ENCODE measurements at regions of chrX and their contacts with region 1.

Region 1: GRCh38 chrX:53071604-53072417 is 10.4 kb upstream of the TSPYL2 start:
- DNase-seq: peak; percentile 82 to 84
- H3K4me3 ChIP-seq: no peak overlapping the region
- H3K27ac ChIP-seq: peak overlapping the region; percentile 70 to 89 (median 80)
- H3K4me1 ChIP-seq: peaks cover 0 to 7% of the 10 kb centered on the region in 2 donors
- H3K27me3 ChIP-seq: no peaks in the 10 kb centered on the region
- CTCF ChIP-seq: peak; percentile 30 to 84 (median 52)
- POLR2A ChIP-seq: no peak

Region 2: DNA sequence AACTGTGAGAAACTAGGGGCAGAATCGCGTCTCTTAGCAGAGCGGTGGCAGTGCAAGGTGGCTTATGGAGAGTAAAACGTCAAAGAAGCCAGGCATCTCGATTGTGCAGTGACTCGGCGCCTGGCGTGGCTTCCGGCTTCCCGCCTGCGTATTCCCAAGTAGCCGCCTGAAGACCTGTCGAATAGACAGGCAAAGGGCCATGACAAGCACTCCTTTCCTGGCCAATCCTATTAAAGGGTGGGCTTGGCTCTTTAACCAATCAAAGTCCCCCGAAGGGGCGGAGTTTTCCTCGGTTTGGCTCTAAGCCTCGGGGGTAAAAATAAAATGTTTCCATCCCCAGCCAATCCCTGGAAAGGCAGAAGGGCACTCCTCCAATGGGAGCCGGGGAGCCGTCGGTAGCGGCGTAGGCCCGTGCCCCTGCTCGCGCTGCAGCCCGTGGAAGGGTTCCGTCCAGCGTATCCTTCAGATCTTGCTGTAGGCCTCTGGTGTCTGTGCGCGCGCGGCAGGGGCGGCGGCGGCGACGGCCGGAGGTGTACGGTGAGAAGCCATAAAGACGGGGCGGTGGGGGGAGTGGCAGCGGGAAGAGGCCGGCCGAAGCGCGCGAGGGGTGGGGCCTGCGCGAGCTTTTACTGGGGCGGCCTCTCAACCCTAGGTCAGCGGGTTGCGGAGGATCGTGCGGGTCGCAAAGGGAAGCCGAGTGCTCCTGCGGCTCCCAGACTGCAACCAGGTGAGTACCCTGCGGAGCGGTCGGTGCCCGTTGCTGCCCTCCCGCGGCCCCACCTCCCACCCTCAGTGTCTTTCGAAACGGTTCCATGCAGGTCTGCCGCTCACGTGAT is 22.2 kb after region 1 on chrX and contains the start of gene KANTR:
- intact Hi-C with region 1: loop called (anchors 2 kb)
- DNase-seq: peak; percentile 89
- H3K4me3 ChIP-seq: peak within 1 kb of the TSS; percentile 20 to 46 (median 42)
- H3K27ac ChIP-seq: peak within 1 kb of the TSS; percentile 78 to 86 (median 86)
- H3K4me1 ChIP-seq: no peaks in the 10 kb centered on the region
- H3K27me3 ChIP-seq: no peaks in the 10 kb centered on the region
- CTCF ChIP-seq: no peak
- POLR2A ChIP-seq: peak in 1 of 2 donors; percentile 63
- total RNA-seq, gene KANTR: 15.5 to 41.5 (median 21.8) TPM

Region 3: DNA sequence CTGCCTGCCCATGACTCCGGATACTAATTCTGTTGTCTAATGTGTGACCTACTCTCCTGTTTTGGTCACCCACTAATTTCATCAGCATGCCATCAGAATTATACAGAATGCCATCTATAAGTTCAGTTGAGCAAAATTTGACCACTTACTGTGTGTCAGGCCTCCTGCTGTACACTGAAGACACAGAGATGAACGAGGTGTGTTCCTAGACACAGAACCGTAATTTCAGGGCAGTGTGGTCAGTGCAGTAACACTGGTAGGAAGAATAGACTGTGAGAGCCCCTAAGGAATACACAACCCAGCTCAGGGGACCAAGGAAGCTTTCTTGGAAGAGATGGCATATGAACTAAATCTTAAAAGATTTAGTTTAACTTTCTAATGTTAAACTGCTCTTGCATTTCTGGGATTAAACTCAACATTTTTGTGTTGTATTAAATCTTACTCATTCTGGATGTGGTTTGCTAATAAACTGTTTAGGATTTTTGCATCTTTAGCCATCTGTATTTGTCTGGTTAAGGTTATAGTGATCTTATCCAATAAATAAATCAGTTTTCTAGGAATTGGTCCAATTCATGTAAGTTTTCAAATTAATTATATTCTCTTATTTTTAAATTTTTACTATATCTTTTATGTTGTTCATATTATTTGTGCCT is 56.4 kb after region 1 on chrX:
- intact Hi-C with region 1: no loop called
- DNase-seq: no peak
- H3K4me3 ChIP-seq: no peak overlapping the region
- H3K27ac ChIP-seq: no peak overlapping the region
- H3K4me1 ChIP-seq: no peaks in the 10 kb centered on the region
- H3K27me3 ChIP-seq: no peaks in the 10 kb centered on the region
- CTCF ChIP-seq: no peak
- POLR2A ChIP-seq: no peak